CD8-positive, alpha-beta T cell (primary cell): ENCODE measurements at regions of chr5 and their contacts with region 1.

Region 1: GRCh38 chr5:107705402-107706014 is 34.8 kb upstream of the EFNA5 start:
- DNase-seq: no peak
- ATAC-seq: no peak
- H3K4me3 ChIP-seq: no peak overlapping the region
- H3K4me3 Mint-ChIP-seq: no peak overlapping the region
- H3K27ac ChIP-seq: no peak overlapping the region
- H3K27ac Mint-ChIP-seq: no peak overlapping the region
- H3K4me1 ChIP-seq: no peaks in the 10 kb centered on the region
- H3K4me1 Mint-ChIP-seq: no peaks in the 10 kb centered on the region
- H3K27me3 ChIP-seq: no peaks in the 10 kb centered on the region
- H3K27me3 Mint-ChIP-seq: peaks cover 7% of the 10 kb centered on the region
- CTCF ChIP-seq: no peak

Region 2: GRCh38 chr5:107501965-107502675 is 203.4 kb before region 1 on chr5:
- CTCF ChIA-PET with region 1: no interaction called
- POLR2A ChIA-PET with region 1: no interaction called
- intact Hi-C with region 1: no loop called
- DNase-seq: peak in 2 of 9 experiments; percentile 49 to 51
- ATAC-seq: peak; percentile 38
- H3K4me3 ChIP-seq: no peak overlapping the region
- H3K4me3 Mint-ChIP-seq: no peak overlapping the region
- H3K27ac ChIP-seq: peak overlapping the region in 1 of 2 experiments; percentile 12
- H3K27ac Mint-ChIP-seq: peak overlapping the region; percentile 2
- H3K4me1 ChIP-seq: no peaks in the 10 kb centered on the region
- H3K4me1 Mint-ChIP-seq: peaks cover 3% of the 10 kb centered on the region
- H3K27me3 ChIP-seq: no peaks in the 10 kb centered on the region
- H3K27me3 Mint-ChIP-seq: peaks cover 5% of the 10 kb centered on the region
- CTCF ChIP-seq: no peak

Region 3: DNA sequence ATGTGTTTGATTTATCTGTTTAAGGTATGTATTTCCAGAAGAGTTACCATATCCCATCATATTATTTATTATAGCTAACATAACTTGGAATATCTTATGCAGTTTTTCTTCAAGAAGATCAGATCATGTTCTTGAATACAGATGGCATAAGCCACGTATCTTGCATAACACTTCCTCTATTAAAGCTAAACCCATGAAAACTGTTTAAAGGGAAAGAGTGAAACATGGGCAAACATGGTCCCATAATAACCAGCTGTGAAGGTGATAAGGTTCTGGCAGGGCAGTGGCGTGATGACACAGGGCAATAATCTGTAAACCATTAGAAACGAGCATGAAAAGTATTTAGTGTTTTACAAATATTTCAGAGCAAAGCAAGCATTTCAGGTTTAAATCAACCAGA is 69.0 kb before region 1 on chr5:
- CTCF ChIA-PET with region 1: no interaction called
- POLR2A ChIA-PET with region 1: no interaction called
- intact Hi-C with region 1: no loop called
- DNase-seq: no peak
- ATAC-seq: no peak
- H3K4me3 ChIP-seq: no peak overlapping the region
- H3K4me3 Mint-ChIP-seq: no peak overlapping the region
- H3K27ac ChIP-seq: no peak overlapping the region
- H3K27ac Mint-ChIP-seq: no peak overlapping the region
- H3K4me1 ChIP-seq: no peaks in the 10 kb centered on the region
- H3K4me1 Mint-ChIP-seq: no peaks in the 10 kb centered on the region
- H3K27me3 ChIP-seq: no peaks in the 10 kb centered on the region
- H3K27me3 Mint-ChIP-seq: peaks cover 10% of the 10 kb centered on the region
- CTCF ChIP-seq: no peak

Region 4: GRCh38 chr5:107680099-107680498 is 25.4 kb before region 1 on chr5:
- CTCF ChIA-PET with region 1: no interaction called
- POLR2A ChIA-PET with region 1: interaction called, 3 read pairs
- intact Hi-C with region 1: loop called in 1 of 2 experiments (anchors 1 kb)
- DNase-seq: no peak
- ATAC-seq: no peak
- H3K4me3 ChIP-seq: no peak overlapping the region
- H3K4me3 Mint-ChIP-seq: no peak overlapping the region
- H3K27ac ChIP-seq: no peak overlapping the region
- H3K27ac Mint-ChIP-seq: no peak overlapping the region
- H3K4me1 ChIP-seq: no peaks in the 10 kb centered on the region
- H3K4me1 Mint-ChIP-seq: no peaks in the 10 kb centered on the region
- H3K27me3 ChIP-seq: peaks cover 0 to 4% of the 10 kb centered on the region in 2 experiments
- H3K27me3 Mint-ChIP-seq: peaks cover 28% of the 10 kb centered on the region
- CTCF ChIP-seq: no peak